Right ventricle myocardium inferior (tissue), 1 donor: ENCODE measurements at regions of chr2 and their contacts with region 1.

Region 1: GRCh38 chr2:219057709-219058540 is 2.8 kb downstream of the IHH start:
- DNase-seq: peak; percentile 88
- ATAC-seq: peak; percentile 93

Region 2: DNA sequence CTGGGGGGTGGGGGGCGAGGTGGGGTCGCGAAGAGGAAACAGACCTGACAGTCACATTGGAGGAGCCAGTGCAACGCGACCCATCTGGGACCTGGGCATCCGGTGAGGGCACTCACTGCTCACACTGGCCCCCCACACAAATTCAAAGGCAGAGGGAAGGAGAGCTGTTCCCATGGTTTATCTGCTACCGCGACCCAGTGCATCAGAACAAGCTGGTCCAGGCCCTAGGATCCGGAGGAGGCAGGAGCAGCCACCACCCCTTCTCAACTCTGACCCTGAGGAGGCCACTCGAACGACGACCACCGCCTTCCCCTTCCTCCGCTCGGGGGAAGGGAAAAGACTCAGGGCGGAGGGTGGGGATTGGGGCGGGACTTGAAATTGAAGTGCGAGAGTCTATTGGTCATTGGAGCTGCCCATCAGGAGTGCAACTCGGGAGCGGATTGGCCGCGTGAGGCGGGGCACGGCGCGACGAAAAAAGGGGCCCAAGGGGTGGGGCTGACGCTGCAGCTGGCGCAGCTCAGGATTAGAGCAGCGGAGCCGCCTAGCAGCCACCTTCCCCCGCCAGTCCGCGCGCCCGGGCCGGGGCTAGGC is 98.7 kb before region 1 on chr2 and contains the start of gene CDK5R2:
- intact Hi-C with region 1: no loop called
- DNase-seq: peak; percentile 78
- ATAC-seq: peak; percentile 53
- total RNA-seq, gene CDK5R2: not detected

Region 3: DNA sequence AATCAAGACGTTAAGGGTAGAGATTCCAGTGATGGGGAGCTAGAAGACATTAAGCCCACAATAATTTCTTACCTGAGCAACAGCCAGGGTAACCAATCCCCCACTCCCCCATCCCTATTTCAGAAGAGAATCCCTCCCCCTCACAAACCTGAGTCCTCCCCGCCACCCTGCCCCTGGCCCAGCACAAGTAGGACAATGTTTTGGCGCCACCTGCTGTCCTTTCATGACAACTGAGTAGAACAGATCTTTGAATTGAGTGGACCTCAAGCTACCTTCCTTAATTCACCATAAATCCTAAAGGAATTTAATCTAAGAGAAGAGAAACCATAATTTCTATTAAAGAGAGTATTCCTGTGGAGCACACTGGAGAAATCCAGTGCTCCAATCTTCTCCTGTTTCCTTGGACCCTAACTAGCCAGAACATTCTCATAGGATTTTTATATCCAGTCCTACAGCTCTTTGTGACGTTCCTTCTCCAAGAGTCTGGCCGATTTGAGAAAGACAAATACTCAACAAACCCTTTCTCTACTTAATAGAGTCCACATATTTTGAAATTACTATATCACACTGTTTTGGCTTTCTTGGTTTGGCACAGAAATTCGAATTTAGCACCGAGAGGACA is 61.6 kb after region 1 on chr2:
- intact Hi-C with region 1: loop called (anchors 1 kb)
- DNase-seq: peak; percentile 72
- ATAC-seq: no peak

Region 4: DNA sequence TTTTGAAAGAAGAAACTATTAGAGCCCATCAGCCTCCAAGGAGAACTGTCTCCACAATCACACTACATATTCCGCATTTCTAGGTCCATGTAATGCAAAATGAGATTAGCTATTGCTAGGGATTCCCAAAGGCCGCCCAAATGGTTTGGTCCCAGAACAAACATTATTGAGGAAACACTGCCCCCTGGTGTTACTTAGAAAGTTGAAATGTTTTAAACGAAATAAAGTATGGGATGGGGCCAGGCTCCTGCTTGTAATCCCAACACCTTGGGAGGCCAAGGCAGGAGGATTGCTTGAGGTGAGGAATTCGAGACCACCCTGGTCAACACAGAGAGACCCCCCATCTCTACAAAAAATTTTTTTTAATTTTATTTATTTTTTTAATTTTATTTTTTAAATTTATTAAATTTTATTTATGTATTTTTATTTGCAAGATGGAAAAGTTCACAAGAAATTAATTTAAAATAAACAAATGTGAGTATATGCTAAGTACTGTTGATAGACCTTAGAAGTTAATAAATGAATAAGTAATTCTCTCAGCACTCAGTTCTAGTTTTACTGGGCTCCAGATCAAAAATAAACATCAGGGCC is 97.2 kb after region 1 on chr2:
- intact Hi-C with region 1: loop called (anchors 2 kb)
- DNase-seq: no peak
- ATAC-seq: no peak

Region 5: DNA sequence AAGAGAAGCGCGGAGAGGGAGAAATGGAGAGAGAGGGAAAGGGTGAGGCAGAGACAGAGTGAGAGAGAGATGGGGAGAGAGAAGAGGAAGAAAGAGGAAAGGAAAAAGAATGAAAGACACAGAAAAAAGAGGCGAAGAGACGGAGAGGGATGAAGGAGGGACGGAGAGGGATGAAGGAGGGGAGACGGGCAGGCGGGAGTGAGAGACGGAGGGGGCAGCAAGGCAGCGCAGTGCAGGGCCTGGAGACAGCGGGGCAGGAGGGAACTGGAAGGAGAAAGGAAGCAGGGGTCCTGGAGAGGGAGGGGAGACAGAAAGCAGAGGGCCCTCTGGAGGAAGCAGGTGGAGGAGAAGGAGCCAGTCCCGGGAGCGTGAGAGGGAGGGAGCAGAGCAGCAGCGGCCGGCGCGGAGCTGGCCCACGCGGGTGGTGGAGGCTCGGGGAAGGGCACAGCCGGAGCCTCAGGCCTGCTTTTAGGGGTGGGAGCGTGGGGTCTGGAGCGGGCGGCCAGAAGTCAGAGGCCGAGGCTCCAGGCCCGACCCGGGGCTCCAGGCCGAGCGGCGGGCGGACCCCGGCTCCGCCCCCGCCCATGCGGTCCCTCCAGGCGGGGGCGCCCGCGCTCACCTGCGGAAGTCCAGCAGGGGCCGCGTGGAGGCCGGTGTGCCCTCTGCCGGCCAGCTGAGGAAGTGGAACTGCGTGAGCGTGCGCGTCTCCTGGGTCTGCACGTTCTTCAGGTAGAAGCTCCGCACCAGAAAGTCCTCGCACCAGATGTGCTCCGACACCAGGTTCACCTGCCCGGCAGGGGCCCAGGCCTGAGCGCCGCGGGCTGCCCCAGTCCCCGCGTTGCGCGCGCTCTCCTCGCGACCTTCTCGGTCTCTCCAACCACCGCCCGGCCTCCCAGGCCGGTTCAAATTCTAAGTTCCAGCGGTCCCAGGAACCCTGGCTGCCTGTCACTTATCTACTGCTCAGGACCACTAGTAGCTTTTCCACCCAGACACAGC is 236.7 kb after region 1 on chr2:
- intact Hi-C with region 1: loop called (anchors 5 kb)
- DNase-seq: peak; percentile 96
- ATAC-seq: peak; percentile 92